OCI-LY7 (cell line): ENCODE measurements at regions of chr22 and their contacts with region 1.

Region 1: GRCh38 chr22:23178512-23179254 is 1.6 kb upstream of the BCR start:
- DNase-seq: peak; percentile 70
- H3K4me3 ChIP-seq: no peak overlapping the region
- H3K27ac ChIP-seq: peak overlapping the region; percentile 33
- H3K4me1 ChIP-seq: peaks cover 57% of the 10 kb centered on the region
- CTCF ChIP-seq: peak; percentile 99

Region 2: GRCh38 chr22:23137905-23138561 is 40.6 kb before region 1 on chr22:
- CTCF ChIA-PET with region 1: no interaction called
- POLR2A ChIA-PET with region 1: no interaction called
- intact Hi-C with region 1: loop called (anchors 2 kb)
- DNase-seq: peak; percentile 89
- H3K4me3 ChIP-seq: peak overlapping the region; percentile 35
- H3K27ac ChIP-seq: peak overlapping the region; percentile 94
- H3K4me1 ChIP-seq: peaks cover 64% of the 10 kb centered on the region
- CTCF ChIP-seq: no peak

Region 3: DNA sequence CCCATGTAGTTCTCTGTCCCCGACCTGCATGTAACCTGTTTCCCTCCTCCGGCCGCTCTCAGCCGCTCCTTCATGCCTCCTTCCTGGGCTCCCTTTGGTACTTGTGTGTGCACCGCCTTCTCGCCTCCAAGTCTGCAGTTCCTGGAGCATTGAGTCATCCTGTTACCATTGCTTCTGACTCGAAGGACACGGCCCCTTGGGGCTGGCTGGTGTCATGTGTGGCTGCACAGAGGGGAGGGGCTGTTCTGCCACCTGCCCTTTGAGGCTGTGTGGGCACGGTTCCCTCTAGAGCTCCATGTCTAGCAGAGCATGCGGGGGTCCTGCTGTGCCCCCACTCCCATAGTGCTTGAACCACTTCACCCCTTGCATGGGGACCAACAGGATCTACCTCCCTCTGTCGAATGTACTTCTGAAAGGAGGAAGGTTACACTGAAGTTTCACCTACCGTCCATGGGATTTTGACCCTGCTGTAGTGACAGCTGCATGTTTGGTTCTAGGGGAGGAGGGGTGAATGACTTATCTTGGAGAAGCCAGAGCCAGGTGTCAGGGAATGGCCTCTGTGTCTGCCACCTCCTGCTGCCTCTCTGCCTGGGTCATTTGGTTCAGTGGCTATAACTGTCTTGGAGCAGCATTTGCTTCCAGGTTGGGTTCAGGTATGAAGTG is 41.3 kb after region 1 on chr22:
- CTCF ChIA-PET with region 1: interaction called, 6 read pairs
- POLR2A ChIA-PET with region 1: interaction called, 5 read pairs
- intact Hi-C with region 1: loop called (anchors 1 kb)
- DNase-seq: peak; percentile 91
- H3K4me3 ChIP-seq: peak overlapping the region; percentile 65
- H3K27ac ChIP-seq: peak overlapping the region; percentile 83
- H3K4me1 ChIP-seq: peaks cover 59% of the 10 kb centered on the region
- CTCF ChIP-seq: no peak

Region 4: DNA sequence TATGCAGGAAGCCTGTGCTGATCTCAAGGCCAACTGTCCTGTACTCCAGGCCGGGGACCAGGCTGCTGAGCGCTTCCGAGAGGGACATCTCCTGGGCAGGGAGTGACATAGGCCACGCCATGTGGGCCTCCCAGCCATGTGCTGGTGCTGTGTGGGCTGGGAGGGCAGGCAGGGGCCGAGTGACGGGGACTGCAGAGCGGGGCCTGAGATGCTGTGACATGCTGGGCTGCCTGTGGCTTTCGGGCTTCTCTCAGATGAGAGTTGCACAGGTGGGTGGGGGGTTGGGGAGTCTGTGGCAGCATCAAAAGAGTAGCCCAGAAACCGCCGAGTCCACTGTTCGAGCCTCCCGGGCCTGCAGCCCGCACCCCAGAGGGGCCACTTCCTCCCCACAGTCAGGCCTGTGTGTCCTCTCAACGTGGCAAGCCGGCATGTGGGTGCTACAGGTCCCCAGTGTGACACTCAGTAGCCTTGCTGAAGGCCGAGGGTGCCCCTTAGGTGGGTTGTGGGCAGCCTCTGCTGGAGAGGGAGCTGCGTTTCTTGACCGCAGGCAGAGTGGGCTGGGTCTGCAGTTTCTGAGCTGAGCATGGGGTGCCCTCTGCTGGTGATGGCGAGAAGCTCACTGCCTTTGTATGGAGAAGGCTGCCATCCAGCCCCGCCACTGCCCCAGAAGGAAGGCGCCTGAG is 102.9 kb after region 1 on chr22:
- CTCF ChIA-PET with region 1: interaction called, 10 read pairs
- POLR2A ChIA-PET with region 1: interaction called, 3 read pairs
- intact Hi-C with region 1: loop called (anchors 1 kb)
- DNase-seq: peak; percentile 89
- H3K4me3 ChIP-seq: no peak overlapping the region
- H3K27ac ChIP-seq: peak overlapping the region; percentile 5
- H3K4me1 ChIP-seq: peaks cover 16% of the 10 kb centered on the region
- CTCF ChIP-seq: peak; percentile 93

Region 5: GRCh38 chr22:23431337-23432072 is 252.8 kb after region 1 on chr22:
- CTCF ChIA-PET with region 1: no interaction called
- POLR2A ChIA-PET with region 1: no interaction called
- intact Hi-C with region 1: no loop called
- DNase-seq: no peak
- H3K4me3 ChIP-seq: no peak overlapping the region
- H3K27ac ChIP-seq: no peak overlapping the region
- H3K4me1 ChIP-seq: peaks cover 14% of the 10 kb centered on the region
- CTCF ChIP-seq: no peak